ENCODE measurements at regions of chr15 and their contacts with region 1.

Region 1: DNA sequence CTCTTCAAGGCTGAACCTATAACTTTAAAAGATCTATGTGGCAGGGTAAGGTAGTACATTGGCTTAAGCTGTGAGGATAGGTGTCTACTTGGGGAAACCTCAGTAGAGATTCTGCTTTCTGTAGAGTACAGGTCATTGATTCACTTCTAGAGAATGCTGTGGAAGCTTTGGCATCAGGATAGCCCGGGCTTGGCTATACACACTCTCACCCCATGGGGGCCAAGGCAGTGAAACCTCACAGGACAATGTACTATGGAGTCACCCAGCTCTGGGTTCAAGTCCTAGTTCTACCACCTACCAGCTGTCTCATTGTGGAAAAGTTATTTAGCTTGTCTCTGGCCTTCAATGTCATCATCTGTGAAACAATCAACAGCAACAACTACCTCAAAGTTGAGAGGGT is 9.0 kb downstream of the MTFMT start:
- DNase-seq: no peak
- ATAC-seq: no peak
- H3K4me3 ChIP-seq: no peak overlapping the region
- H3K27ac ChIP-seq: no peak overlapping the region
- H3K4me1 ChIP-seq: no peaks in the 10 kb centered on the region
- H3K27me3 ChIP-seq: no peaks in the 10 kb centered on the region
- CTCF ChIP-seq: no peak

Region 2: GRCh38 chr15:64950888-64951287 is 69.5 kb before region 1 on chr15:
- intact Hi-C with region 1: no loop called
- DNase-seq: no peak
- ATAC-seq: no peak
- H3K4me3 ChIP-seq: no peak overlapping the region
- H3K27ac ChIP-seq: no peak overlapping the region
- H3K4me1 ChIP-seq: no peaks in the 10 kb centered on the region
- H3K27me3 ChIP-seq: no peaks in the 10 kb centered on the region
- CTCF ChIP-seq: no peak

Region 3: GRCh38 chr15:64979252-64979710 is 41.1 kb before region 1 on chr15:
- intact Hi-C with region 1: loop called in 1 of 10 experiments (anchors 1 kb)
- DNase-seq: no peak
- ATAC-seq: no peak
- H3K4me3 ChIP-seq: no peak overlapping the region
- H3K27ac ChIP-seq: no peak overlapping the region
- H3K4me1 ChIP-seq: peaks cover 0 to 14% (median 0%) of the 10 kb centered on the region in 9 donors
- H3K27me3 ChIP-seq: no peaks in the 10 kb centered on the region
- CTCF ChIP-seq: no peak